ENCODE measurements at regions of chr17 and their contacts with region 1.

Region 1: DNA sequence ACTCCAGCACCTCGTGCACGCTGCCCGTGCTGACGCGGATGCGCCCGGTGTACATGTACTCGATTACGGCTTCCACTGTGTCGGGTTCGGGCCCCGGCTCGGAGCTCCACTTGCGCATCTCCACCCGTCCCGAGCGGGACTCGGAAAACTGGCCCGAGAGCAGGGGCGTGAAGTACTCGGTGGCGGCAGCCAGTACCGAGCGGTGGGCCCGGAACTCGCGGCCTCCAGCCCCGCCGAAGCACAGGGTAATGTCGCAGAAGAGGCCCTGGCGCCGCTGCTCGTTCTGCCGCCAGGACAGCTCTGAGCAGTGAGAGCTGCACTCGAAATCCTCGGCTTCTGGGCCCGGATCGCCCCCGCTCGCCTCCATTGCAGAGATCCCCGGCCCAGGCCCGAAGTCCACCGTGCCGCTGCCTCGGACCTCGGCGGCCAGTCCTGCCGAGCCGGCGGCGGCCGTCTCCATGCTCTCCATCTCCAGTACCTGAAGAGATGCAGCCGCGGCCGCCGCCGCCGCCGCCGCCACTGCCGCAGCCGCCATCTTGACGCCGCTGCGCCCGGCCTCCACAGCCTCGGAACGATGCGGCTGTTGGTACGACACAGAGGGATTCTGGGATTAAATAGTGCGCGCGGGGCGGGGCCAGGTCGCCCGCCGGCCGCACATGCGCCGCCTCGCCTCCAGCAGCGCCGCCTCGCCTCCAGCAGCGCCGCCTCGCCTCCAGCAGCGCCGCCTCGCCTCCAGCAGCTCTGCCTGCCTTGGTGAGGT is at the start of gene KLHL11:
- DNase-seq: peak; percentile 79 to 95 (median 84)
- ATAC-seq: peak; percentile 88
- H3K4me3 ChIP-seq: peak within 1 kb of the TSS; percentile 95
- H3K4me3 Mint-ChIP-seq: no peak within 1 kb of the TSS
- H3K27ac ChIP-seq: peak within 1 kb of the TSS; percentile 79 to 87
- H3K27ac Mint-ChIP-seq: no peak within 1 kb of the TSS
- H3K4me1 ChIP-seq: peaks cover 46% of the 10 kb centered on the region
- H3K4me1 Mint-ChIP-seq: peaks cover 20% of the 10 kb centered on the region
- H3K27me3 ChIP-seq: no peaks in the 10 kb centered on the region
- H3K27me3 Mint-ChIP-seq: no peaks in the 10 kb centered on the region
- CTCF ChIP-seq: no peak
- total RNA-seq, gene KLHL11: 32.9 to 34.0 TPM

Region 2: DNA sequence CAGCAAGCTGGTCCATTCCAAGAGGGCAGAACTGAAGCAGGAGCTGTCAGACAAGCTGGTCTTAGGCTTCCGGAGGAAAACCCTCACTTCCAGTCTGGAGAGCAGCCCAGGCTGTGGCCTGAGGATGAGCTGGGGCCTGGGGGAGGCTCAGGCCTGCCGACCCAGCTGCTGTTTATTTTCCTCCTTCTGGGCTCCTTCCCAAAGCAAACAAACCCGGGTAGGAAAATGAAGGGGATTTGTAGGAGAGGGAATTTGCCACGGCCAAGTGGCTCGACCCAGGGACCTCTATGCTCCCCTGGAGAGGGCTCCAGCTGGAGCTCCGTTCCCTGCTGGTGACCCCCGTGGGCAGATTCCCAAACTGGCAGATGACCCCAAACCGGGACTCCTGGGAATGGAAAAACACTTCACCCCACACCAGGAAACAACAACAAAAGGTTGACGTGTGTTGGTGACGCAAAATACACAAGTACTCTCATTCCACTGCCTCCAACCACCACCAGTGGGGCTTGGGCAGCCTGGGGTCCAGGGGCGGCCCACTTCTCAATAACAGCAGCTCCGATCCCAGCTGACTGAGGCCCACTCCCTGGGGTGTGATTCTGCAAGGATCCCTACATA is 87.3 kb before region 1 on chr17:
- CTCF ChIA-PET with region 1: no interaction called
- POLR2A ChIA-PET with region 1: no interaction called
- intact Hi-C with region 1: no loop called
- DNase-seq: no peak
- ATAC-seq: no peak
- H3K4me3 ChIP-seq: no peak overlapping the region
- H3K4me3 Mint-ChIP-seq: no peak overlapping the region
- H3K27ac ChIP-seq: no peak overlapping the region
- H3K27ac Mint-ChIP-seq: no peak overlapping the region
- H3K4me1 ChIP-seq: no peaks in the 10 kb centered on the region
- H3K4me1 Mint-ChIP-seq: no peaks in the 10 kb centered on the region
- H3K27me3 ChIP-seq: peaks cover 4 to 6% of the 10 kb centered on the region in 2 experiments
- H3K27me3 Mint-ChIP-seq: peaks cover 14% of the 10 kb centered on the region
- CTCF ChIP-seq: no peak

Region 3: GRCh38 chr17:41811549-41812380 is 53.3 kb before region 1 on chr17 and contains the start of gene P3H4:
- CTCF ChIA-PET with region 1: interaction called, 15 read pairs
- POLR2A ChIA-PET with region 1: interaction called, 13 read pairs
- intact Hi-C with region 1: no loop called
- DNase-seq: peak; percentile 44 to 90 (median 70)
- ATAC-seq: peak; percentile 91
- H3K4me3 ChIP-seq: peak within 1 kb of the TSS; percentile 60
- H3K4me3 Mint-ChIP-seq: peak within 1 kb of the TSS; percentile 97
- H3K27ac ChIP-seq: no peak within 1 kb of the TSS
- H3K27ac Mint-ChIP-seq: peak within 1 kb of the TSS; percentile 36
- H3K4me1 ChIP-seq: peaks cover 34% of the 10 kb centered on the region
- H3K4me1 Mint-ChIP-seq: peaks cover 22% of the 10 kb centered on the region
- H3K27me3 ChIP-seq: no peaks in the 10 kb centered on the region
- H3K27me3 Mint-ChIP-seq: no peaks in the 10 kb centered on the region
- CTCF ChIP-seq: peak; percentile 68
- total RNA-seq, gene P3H4: 1.3 to 2.3 TPM

Region 4: GRCh38 chr17:41821776-41822175 is 43.2 kb before region 1 on chr17:
- CTCF ChIA-PET with region 1: no interaction called
- POLR2A ChIA-PET with region 1: no interaction called
- intact Hi-C with region 1: no loop called
- DNase-seq: no peak
- ATAC-seq: no peak
- H3K4me3 ChIP-seq: no peak overlapping the region
- H3K4me3 Mint-ChIP-seq: no peak overlapping the region
- H3K27ac ChIP-seq: no peak overlapping the region
- H3K27ac Mint-ChIP-seq: no peak overlapping the region
- H3K4me1 ChIP-seq: no peaks in the 10 kb centered on the region
- H3K4me1 Mint-ChIP-seq: no peaks in the 10 kb centered on the region
- H3K27me3 ChIP-seq: no peaks in the 10 kb centered on the region
- H3K27me3 Mint-ChIP-seq: no peaks in the 10 kb centered on the region
- CTCF ChIP-seq: no peak

Region 5: DNA sequence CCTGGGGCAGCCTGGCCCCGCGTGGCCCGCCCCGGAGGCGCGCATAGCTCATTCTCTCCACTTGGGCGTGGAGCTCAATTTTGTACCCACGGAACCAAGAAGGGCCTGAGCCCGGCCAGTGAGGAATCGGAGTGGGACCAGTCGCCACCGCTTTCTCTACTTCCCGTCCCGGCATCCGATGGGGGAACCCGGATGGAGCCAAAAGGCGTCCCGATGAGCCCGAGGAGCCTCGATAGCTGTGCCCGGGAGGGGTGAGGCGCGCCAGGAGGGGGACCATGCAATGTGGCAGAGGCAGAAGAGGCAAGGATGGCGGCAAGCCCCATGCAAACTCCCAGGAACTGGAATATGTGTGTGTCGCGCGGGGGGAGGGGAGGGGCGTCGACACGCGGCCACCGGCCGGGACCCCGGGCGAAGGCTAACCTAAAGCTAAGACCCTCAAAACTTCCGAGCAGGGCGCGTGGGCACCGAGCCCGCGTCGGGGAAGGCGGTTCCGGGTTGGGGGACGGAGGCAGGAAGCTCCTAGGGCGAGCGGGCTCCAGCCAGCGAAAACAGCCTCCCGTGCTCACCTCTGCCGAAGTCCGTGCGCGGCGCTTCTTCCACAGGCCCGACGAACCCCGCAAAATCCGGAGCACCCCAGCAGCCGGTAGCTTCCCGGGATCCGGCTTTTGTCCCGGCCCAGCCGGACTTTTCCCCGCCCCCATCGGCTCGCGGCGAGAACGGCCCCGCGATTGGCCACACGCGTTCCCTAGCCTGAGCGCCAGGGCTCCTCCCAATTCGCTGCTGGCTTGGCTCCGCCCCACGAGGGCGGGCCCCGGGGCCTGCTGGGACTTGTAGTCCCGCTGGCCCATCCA is 53.5 kb after region 1 on chr17 and contains the start of gene ACLY:
- CTCF ChIA-PET with region 1: interaction called, 3 read pairs
- POLR2A ChIA-PET with region 1: interaction called, 20 read pairs
- intact Hi-C with region 1: loop called in 1 of 2 experiments (anchors 5 kb)
- DNase-seq: peak; percentile 87 to 98 (median 94)
- ATAC-seq: peak; percentile 99
- H3K4me3 ChIP-seq: peak within 1 kb of the TSS; percentile 90
- H3K4me3 Mint-ChIP-seq: peak within 1 kb of the TSS; percentile 95
- H3K27ac ChIP-seq: peak within 1 kb of the TSS; percentile 69 to 74
- H3K27ac Mint-ChIP-seq: peak within 1 kb of the TSS; percentile 64
- H3K4me1 ChIP-seq: peaks cover 35% of the 10 kb centered on the region
- H3K4me1 Mint-ChIP-seq: peaks cover 27% of the 10 kb centered on the region
- H3K27me3 ChIP-seq: no peaks in the 10 kb centered on the region
- H3K27me3 Mint-ChIP-seq: no peaks in the 10 kb centered on the region
- CTCF ChIP-seq: no peak
- total RNA-seq, gene ACLY: 25.9 to 28.3 TPM

Region 6: DNA sequence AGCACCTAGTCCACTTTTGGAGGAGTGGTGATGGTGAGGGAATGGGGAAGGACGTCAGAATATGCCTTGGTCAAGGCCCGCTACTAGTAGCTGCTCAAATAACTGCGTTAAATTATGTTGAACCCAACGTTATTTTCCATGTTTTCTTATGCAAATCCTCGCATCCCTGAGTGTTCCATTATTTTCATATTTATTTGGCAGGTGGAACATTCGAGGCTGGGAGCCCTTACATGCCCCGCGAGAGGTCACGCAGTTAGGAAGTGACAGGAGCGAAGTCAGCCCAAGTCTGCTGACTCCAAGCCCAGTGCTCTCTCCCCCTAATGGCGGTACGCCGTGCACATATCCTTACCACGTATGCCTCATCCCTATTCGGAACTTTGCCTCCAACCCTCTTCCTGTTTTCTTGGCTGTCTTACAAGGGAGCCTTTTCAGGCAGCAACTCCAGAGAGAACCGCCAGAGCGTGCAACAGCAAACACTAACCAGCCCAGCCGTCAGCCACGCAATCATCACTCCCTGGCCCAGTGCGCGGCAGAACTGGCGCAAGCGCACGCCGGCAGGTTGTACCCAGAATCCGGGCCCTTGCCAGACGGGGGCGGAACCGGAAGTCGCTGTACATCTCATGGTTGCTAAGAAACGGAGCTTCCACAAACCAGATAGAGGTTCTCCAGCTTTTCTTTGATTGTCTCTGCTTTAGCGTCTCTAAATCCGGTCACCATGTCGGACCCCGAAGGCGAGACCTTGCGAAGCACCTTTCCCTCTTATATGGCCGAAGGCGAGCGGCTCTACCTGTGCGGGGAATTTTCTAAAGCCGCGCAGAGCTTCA is 65.2 kb after region 1 on chr17 and contains the start of gene ODAD4:
- CTCF ChIA-PET with region 1: no interaction called
- POLR2A ChIA-PET with region 1: interaction called, 15 read pairs
- intact Hi-C with region 1: no loop called
- DNase-seq: peak; percentile 93 to 99 (median 95)
- ATAC-seq: peak; percentile 99
- H3K4me3 ChIP-seq: peak within 1 kb of the TSS; percentile 68
- H3K4me3 Mint-ChIP-seq: peak within 1 kb of the TSS; percentile 91
- H3K27ac ChIP-seq: peak within 1 kb of the TSS; percentile 75 to 92
- H3K27ac Mint-ChIP-seq: peak within 1 kb of the TSS; percentile 89
- H3K4me1 ChIP-seq: peaks cover 23% of the 10 kb centered on the region
- H3K4me1 Mint-ChIP-seq: peaks cover 19% of the 10 kb centered on the region
- H3K27me3 ChIP-seq: no peaks in the 10 kb centered on the region
- H3K27me3 Mint-ChIP-seq: no peaks in the 10 kb centered on the region
- CTCF ChIP-seq: peak; percentile 42
- total RNA-seq, gene ODAD4: 2.2 to 2.7 TPM

Region 7: DNA sequence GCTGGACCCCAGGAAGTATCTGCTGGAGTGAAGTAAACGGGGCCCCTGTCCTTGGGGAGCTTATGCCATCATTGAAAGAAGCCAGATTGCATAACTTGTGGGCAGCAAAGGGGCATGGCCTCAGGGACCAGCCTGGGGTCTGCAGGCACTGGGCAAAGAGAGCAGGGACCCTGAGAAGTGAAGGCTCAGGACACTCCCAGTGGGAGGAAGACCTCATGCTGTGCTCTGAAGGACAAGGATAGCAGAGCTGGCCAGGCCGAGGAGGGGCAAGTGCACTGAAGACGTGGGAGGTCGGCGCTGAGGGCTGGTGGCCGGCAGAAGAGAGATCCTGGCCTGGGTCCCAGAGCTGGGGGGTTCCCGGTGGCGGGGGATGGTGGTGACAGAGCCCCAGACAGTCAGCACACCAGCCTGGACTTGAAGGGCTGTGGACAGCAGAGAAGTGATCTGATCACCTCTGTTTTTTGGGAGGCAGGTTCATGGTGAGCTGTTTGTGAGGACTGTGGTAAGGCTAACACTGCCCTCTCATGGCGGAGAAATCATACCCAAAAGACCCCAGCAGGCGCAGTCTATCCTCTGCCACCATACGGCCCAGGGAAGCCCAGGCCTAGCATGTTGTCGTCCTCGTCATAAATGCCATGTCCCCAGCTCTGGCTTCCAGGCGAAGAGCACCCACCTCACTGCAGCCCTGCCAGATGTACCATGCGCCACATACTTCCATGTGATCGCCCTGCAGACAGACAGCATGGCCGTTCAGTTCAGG is 94.5 kb after region 1 on chr17:
- CTCF ChIA-PET with region 1: no interaction called
- POLR2A ChIA-PET with region 1: no interaction called
- intact Hi-C with region 1: no loop called
- DNase-seq: no peak
- ATAC-seq: no peak
- H3K4me3 ChIP-seq: no peak overlapping the region
- H3K4me3 Mint-ChIP-seq: no peak overlapping the region
- H3K27ac ChIP-seq: no peak overlapping the region
- H3K27ac Mint-ChIP-seq: no peak overlapping the region
- H3K4me1 ChIP-seq: peaks cover 3% of the 10 kb centered on the region
- H3K4me1 Mint-ChIP-seq: no peaks in the 10 kb centered on the region
- H3K27me3 ChIP-seq: no peaks in the 10 kb centered on the region
- H3K27me3 Mint-ChIP-seq: no peaks in the 10 kb centered on the region
- CTCF ChIP-seq: no peak

Region 8: DNA sequence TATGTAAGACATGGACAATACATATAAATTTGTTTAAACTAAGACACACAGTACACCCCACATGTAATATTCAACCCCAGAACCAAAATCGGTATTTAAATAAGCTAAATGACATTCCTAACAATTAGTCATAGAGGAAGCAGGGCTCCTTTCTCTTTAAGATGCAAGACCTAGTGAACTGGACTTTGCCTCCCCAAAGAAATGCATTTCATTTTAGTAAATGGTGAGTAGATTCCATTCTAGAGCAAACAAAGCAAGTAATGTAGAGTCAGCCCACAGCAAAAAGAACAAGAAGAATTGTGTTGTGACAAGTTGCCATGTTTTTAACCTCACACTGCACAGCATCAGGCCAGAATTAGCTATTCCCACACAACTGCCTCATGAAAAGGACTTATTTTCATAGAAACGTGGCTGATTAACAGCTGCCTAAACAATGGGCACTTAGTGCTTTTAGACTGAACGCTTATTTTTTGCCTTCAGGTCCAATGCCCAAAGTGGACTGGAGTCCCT is 137.8 kb after region 1 on chr17:
- CTCF ChIA-PET with region 1: no interaction called
- POLR2A ChIA-PET with region 1: no interaction called
- intact Hi-C with region 1: no loop called
- DNase-seq: no peak
- ATAC-seq: no peak
- H3K4me3 ChIP-seq: no peak overlapping the region
- H3K4me3 Mint-ChIP-seq: no peak overlapping the region
- H3K27ac ChIP-seq: no peak overlapping the region
- H3K27ac Mint-ChIP-seq: peak overlapping the region; percentile 44
- H3K4me1 ChIP-seq: peaks cover 7% of the 10 kb centered on the region
- H3K4me1 Mint-ChIP-seq: peaks cover 16% of the 10 kb centered on the region
- H3K27me3 ChIP-seq: no peaks in the 10 kb centered on the region
- H3K27me3 Mint-ChIP-seq: no peaks in the 10 kb centered on the region
- CTCF ChIP-seq: no peak